ENCODE measurements at regions of chr2 and their contacts with region 1.

Region 1: DNA sequence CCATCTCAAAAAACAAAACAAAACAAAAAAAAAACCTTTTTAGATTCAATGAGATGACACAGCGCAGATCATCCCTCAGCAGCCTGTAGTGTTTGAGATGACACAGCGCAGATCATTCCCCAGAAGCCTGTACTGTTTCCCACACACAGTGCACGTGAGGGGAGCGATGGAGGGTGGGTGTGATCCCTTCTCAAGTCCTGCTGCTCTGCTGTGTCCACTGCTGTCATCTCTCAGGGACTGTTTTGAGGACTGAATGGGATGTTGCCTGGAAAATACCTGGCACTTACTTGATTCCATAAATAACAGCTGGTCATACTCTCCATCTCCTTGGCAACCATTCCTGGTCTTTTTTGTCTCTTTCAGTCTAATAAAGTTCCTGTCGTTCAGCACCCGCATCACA is 25.7 kb downstream of the TGOLN2 start:
- DNase-seq: no peak
- ATAC-seq: no peak
- H3K4me3 ChIP-seq: no peak overlapping the region
- H3K27ac ChIP-seq: no peak overlapping the region
- H3K4me1 ChIP-seq: peaks cover 0 to 9% of the 10 kb centered on the region in 2 experiments; a peak in 2 of 4 replicates
- H3K27me3 ChIP-seq: no peaks in the 10 kb centered on the region
- CTCF ChIP-seq: no peak
- POLR2A ChIP-seq: no peak
- RAD21 ChIP-seq: no peak

Region 2: GRCh38 chr2:84495539-84496146 is 806.5 kb before region 1 on chr2:
- CTCF ChIA-PET with region 1: no interaction called
- POLR2A ChIA-PET with region 1: no interaction called
- RAD21 ChIA-PET with region 1: no interaction called
- intact Hi-C with region 1: loop called (anchors 1 kb)
- DNase-seq: peak; percentile 70
- ATAC-seq: peak; percentile 88
- H3K4me3 ChIP-seq: no peak overlapping the region
- H3K27ac ChIP-seq: no peak overlapping the region
- H3K4me1 ChIP-seq: no peaks in the 10 kb centered on the region; a peak in 1 of 4 replicates
- H3K27me3 ChIP-seq: no peaks in the 10 kb centered on the region
- CTCF ChIP-seq: peak; percentile 61 to 84 (median 61)
- POLR2A ChIP-seq: no peak
- RAD21 ChIP-seq: peak; percentile 90

Region 3: DNA sequence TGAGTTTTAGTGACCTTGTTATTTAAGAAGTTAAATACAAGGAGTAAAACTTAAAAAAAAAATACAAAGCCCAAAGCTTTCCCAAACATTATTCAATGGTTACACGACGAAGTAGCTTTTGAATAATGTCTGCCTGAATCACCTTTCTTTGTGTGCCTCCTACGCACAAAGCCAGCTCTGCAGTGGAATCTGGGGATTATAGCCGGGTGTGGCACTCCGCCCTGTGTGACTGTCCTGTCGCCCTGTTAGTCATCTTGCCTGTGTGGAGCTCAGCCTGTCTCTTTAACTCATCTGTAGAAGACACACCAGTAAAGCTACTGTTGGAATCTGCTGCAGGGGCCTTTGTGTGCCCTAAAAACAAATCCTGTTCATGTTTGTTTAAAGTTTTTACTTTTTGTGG is 248.3 kb before region 1 on chr2:
- CTCF ChIA-PET with region 1: interaction called, 24 read pairs
- POLR2A ChIA-PET with region 1: no interaction called
- RAD21 ChIA-PET with region 1: no interaction called
- intact Hi-C with region 1: no loop called
- DNase-seq: peak; percentile 91
- ATAC-seq: peak; percentile 99
- H3K4me3 ChIP-seq: peak overlapping the region; percentile 24 to 44
- H3K27ac ChIP-seq: peak overlapping the region; percentile 46; the same call in 1 of the 2 replicates
- H3K4me1 ChIP-seq: peaks cover 27 to 47% of the 10 kb centered on the region in 2 experiments
- H3K27me3 ChIP-seq: no peaks in the 10 kb centered on the region
- CTCF ChIP-seq: no peak
- POLR2A ChIP-seq: no peak
- RAD21 ChIP-seq: 0 out of 2 replicates have a peak, but pooled peaks have one; percentile 26

Region 4: DNA sequence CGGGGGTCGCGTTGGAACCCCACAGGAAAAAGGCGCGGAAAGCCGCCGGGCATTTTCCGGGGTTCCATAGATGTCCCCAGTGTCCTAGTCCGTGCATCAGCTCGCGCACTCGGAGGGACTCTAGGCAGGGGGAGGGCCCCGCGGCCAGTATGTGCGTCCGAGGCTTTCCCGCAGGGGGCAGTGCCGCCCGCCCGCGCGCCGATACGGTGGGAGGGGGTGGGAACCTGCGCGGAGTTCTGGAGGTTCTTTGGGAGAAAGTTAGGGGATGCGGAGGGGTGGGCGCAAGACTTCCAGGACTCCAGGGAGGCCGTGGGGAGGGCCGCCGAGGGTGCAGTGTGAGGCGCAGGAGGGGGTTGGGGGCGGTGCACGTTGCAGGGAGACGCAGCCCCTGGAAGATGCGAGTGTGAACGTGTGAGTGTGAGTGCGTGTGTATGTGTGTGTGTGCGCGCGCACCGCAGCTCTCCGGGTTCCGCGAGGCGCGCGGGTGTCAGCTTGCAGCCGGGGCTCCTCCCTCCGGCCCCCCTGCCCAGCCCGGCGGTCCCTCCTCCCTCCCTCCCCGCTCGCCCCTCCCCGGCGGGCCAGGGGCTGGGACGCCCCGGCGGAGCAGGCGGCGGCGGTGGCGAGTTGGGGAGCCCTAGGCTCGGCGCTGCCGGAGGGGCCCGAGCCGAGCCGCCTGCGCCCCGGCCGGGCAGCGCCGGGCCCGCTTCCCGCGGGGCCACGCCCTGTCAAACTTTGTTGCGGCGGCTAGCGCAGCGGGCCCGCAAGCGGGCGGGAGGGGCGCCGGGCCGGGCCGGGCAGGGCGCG is 169.1 kb before region 1 on chr2 and contains the start of gene TCF7L1:
- CTCF ChIA-PET with region 1: interaction called, 5 read pairs
- POLR2A ChIA-PET with region 1: no interaction called
- RAD21 ChIA-PET with region 1: no interaction called
- intact Hi-C with region 1: loop called (anchors 1 kb)
- DNase-seq: peak; percentile 70
- ATAC-seq: peak; percentile 92
- H3K4me3 ChIP-seq: peak within 1 kb of the TSS; percentile 63 to 71
- H3K27ac ChIP-seq: peak within 1 kb of the TSS; percentile 42; the same call in 1 of the 2 replicates
- H3K4me1 ChIP-seq: peaks cover 12 to 22% of the 10 kb centered on the region in 2 experiments; a peak in 3 of 4 replicates
- H3K27me3 ChIP-seq: no peaks in the 10 kb centered on the region
- CTCF ChIP-seq: peak; percentile 58 to 83 (median 81); a peak in 5 of 6 replicates
- POLR2A ChIP-seq: peak; percentile 22
- RAD21 ChIP-seq: peak; percentile 75
- total RNA-seq, gene TCF7L1: 10.3 TPM

Region 5: DNA sequence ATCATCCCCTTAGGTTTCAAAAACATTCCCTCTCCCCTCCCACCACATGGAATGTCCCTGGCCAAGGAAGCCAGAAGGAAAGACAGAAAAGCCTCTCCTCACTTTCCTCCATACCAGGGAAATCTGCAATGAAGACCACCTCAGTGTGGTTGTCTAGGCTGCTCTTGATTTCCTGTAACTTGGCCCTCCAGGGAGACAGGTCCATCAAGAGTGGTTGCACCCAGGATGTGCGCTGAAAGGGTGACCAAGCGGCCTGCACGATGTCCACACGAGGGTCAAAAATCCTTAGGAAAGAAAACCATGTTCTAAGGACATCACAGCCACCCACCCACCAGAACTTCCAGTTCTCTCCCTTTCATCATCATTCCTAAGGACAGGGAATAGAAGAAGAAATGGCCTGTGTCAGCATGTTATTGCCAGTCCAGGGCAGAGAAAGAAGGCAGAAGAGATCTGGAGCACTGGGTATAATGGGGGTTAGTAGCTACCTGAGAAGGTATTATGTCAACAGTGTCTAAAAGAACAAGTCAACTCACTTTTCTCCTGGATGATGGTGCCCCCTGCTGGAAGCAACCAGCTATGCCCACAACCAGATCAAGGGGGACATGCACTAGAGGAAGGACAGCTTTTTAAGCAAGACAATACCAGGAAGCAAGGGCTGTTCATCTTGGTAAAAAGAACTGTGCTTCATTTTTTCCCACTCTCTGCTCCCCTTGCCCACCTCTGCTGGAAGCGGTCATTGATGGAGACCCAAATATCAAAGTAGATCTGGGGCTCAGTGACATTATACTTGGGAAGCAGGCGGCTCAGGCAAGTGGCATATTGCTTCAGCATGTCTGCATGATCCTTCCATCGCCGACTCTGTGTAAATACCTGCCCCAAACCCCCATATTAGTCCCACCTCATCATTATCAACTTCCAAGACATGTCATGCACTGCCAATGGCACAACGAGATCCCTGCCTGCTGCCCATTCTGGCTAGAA is 249.9 kb after region 1 on chr2:
- CTCF ChIA-PET with region 1: interaction called, 17 read pairs
- POLR2A ChIA-PET with region 1: no interaction called
- RAD21 ChIA-PET with region 1: interaction called, 4 read pairs
- intact Hi-C with region 1: no loop called
- DNase-seq: peak; percentile 72
- ATAC-seq: peak; percentile 81
- H3K4me3 ChIP-seq: no peak overlapping the region
- H3K27ac ChIP-seq: 0 out of 2 replicates have a peak overlapping the region, but pooled peaks have one; percentile 4
- H3K4me1 ChIP-seq: no peaks in the 10 kb centered on the region
- H3K27me3 ChIP-seq: no peaks in the 10 kb centered on the region
- CTCF ChIP-seq: peak; percentile 91 to 96 (median 95)
- POLR2A ChIP-seq: no peak
- RAD21 ChIP-seq: peak; percentile 99

Measured in HCT116 (cell line).